Mammary epithelial cell (primary cell): ENCODE measurements at regions of chr7 and their contacts with region 1.

Region 1: GRCh38 chr7:110421490-110422241 is 669.3 kb upstream of the LRRN3 start:
- DNase-seq: no peak
- H3K4me3 ChIP-seq: no peak overlapping the region
- H3K27ac ChIP-seq: no peak overlapping the region
- H3K4me1 ChIP-seq: no peaks in the 10 kb centered on the region
- H3K27me3 ChIP-seq: no peaks in the 10 kb centered on the region
- CTCF ChIP-seq: no peak

Region 2: DNA sequence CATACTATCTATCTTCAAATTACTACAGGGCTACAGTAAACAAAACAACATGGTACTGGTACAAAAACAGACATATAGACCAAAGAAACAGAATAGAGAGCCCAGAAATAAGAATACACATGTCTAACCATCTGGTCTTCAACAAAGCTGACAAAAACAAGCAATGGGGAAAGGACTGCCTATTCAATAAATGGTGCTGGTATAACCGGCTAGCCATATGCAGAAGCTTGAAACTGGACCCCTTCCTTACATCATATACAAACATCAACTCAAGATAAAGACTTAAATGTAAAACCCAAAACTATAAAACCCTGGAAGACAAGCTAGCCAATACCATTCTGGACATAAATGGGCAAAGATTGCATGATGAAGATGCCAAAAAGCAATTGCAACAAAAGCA is 708.3 kb before region 1 on chr7:
- CTCF ChIA-PET with region 1: no interaction called
- dilution Hi-C with region 1: no loop called
- in situ Hi-C with region 1: no loop called
- intact Hi-C with region 1: no loop called
- DNase-seq: no peak
- H3K4me3 ChIP-seq: no peak overlapping the region
- H3K27ac ChIP-seq: no peak overlapping the region
- H3K4me1 ChIP-seq: no peaks in the 10 kb centered on the region
- H3K27me3 ChIP-seq: no peaks in the 10 kb centered on the region
- CTCF ChIP-seq: no peak

Region 3: GRCh38 chr7:110386914-110387313 is 34.8 kb before region 1 on chr7:
- CTCF ChIA-PET with region 1: no interaction called
- dilution Hi-C with region 1: no loop called
- in situ Hi-C with region 1: no loop called
- intact Hi-C with region 1: loop called (anchors 5 kb)
- DNase-seq: peak; percentile 89
- H3K4me3 ChIP-seq: no peak overlapping the region
- H3K27ac ChIP-seq: peak overlapping the region; percentile 83
- H3K4me1 ChIP-seq: peaks cover 36% of the 10 kb centered on the region
- H3K27me3 ChIP-seq: no peaks in the 10 kb centered on the region
- CTCF ChIP-seq: no peak

Region 4: GRCh38 chr7:110724811-110725210 is 303.1 kb after region 1 on chr7:
- CTCF ChIA-PET with region 1: no interaction called
- dilution Hi-C with region 1: no loop called
- in situ Hi-C with region 1: no loop called
- intact Hi-C with region 1: no loop called
- DNase-seq: no peak
- H3K4me3 ChIP-seq: no peak overlapping the region
- H3K27ac ChIP-seq: no peak overlapping the region
- H3K4me1 ChIP-seq: no peaks in the 10 kb centered on the region
- H3K27me3 ChIP-seq: no peaks in the 10 kb centered on the region
- CTCF ChIP-seq: no peak